ENCODE measurements at regions of chr7 and their contacts with region 1.

Region 1: GRCh38 chr7:151017953-151018420 is 6.3 kb downstream of the ATG9B start:
- DNase-seq: peak; percentile 69 to 88 (median 79)
- ATAC-seq: peak; percentile 50
- H3K4me3 ChIP-seq: peak overlapping the region; percentile 52
- H3K4me3 Mint-ChIP-seq: peak overlapping the region; percentile 79
- H3K27ac ChIP-seq: peak overlapping the region; percentile 1 to 41
- H3K27ac Mint-ChIP-seq: peak overlapping the region; percentile 83
- H3K4me1 ChIP-seq: peaks cover 66% of the 10 kb centered on the region
- H3K4me1 Mint-ChIP-seq: peaks cover 61% of the 10 kb centered on the region
- H3K27me3 ChIP-seq: peaks cover 4 to 7% of the 10 kb centered on the region in 2 experiments
- H3K27me3 Mint-ChIP-seq: peaks cover 10% of the 10 kb centered on the region
- CTCF ChIP-seq: peak; percentile 98

Region 2: GRCh38 chr7:150404805-150405583 is 613.0 kb before region 1 on chr7:
- CTCF ChIA-PET with region 1: no interaction called
- POLR2A ChIA-PET with region 1: no interaction called
- intact Hi-C with region 1: no loop called
- DNase-seq: peak; percentile 56 to 92 (median 72)
- ATAC-seq: peak; percentile 82
- H3K4me3 ChIP-seq: peak overlapping the region; percentile 90
- H3K4me3 Mint-ChIP-seq: peak overlapping the region; percentile 94
- H3K27ac ChIP-seq: peak overlapping the region; percentile 88 to 89
- H3K27ac Mint-ChIP-seq: peak overlapping the region; percentile 82
- H3K4me1 ChIP-seq: peaks cover 34% of the 10 kb centered on the region
- H3K4me1 Mint-ChIP-seq: peaks cover 37% of the 10 kb centered on the region
- H3K27me3 ChIP-seq: no peaks in the 10 kb centered on the region
- H3K27me3 Mint-ChIP-seq: no peaks in the 10 kb centered on the region
- CTCF ChIP-seq: no peak

Region 3: DNA sequence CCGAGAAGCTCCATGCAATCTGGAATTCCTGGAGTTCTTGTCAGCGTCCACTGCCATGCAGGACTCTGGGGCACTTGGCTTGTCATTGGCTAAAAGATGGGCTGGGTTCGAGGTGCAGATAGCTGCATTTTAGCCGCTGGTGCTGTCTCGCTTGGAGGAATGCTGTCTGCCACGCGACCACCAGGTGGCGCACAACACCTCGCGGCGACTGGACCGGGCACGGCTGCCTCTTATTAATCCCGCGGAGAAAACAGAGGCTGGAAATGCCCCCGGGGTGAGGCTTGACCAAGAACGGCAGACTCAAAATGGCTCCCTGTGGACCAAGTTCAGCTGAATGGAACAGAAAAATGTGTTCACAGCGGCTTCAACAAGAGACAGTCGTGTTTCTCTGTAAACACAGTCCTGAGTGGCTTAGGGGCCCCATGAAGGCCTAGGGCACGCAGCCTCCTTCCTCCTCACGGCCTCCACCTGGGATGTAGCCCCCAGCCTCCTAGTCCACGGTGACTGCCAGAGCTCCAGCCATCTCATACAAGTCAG is 119.4 kb before region 1 on chr7:
- CTCF ChIA-PET with region 1: interaction called, 4 read pairs
- POLR2A ChIA-PET with region 1: interaction called, 3 read pairs
- intact Hi-C with region 1: loop called in 1 of 2 experiments (anchors 1 kb)
- DNase-seq: peak; percentile 58 to 87 (median 76)
- ATAC-seq: peak; percentile 87
- H3K4me3 ChIP-seq: no peak overlapping the region
- H3K4me3 Mint-ChIP-seq: no peak overlapping the region
- H3K27ac ChIP-seq: no peak overlapping the region
- H3K27ac Mint-ChIP-seq: no peak overlapping the region
- H3K4me1 ChIP-seq: peaks cover 13% of the 10 kb centered on the region
- H3K4me1 Mint-ChIP-seq: no peaks in the 10 kb centered on the region
- H3K27me3 ChIP-seq: peaks cover 25 to 32% of the 10 kb centered on the region in 2 experiments
- H3K27me3 Mint-ChIP-seq: peaks cover 67% of the 10 kb centered on the region
- CTCF ChIP-seq: peak; percentile 95

Region 4: DNA sequence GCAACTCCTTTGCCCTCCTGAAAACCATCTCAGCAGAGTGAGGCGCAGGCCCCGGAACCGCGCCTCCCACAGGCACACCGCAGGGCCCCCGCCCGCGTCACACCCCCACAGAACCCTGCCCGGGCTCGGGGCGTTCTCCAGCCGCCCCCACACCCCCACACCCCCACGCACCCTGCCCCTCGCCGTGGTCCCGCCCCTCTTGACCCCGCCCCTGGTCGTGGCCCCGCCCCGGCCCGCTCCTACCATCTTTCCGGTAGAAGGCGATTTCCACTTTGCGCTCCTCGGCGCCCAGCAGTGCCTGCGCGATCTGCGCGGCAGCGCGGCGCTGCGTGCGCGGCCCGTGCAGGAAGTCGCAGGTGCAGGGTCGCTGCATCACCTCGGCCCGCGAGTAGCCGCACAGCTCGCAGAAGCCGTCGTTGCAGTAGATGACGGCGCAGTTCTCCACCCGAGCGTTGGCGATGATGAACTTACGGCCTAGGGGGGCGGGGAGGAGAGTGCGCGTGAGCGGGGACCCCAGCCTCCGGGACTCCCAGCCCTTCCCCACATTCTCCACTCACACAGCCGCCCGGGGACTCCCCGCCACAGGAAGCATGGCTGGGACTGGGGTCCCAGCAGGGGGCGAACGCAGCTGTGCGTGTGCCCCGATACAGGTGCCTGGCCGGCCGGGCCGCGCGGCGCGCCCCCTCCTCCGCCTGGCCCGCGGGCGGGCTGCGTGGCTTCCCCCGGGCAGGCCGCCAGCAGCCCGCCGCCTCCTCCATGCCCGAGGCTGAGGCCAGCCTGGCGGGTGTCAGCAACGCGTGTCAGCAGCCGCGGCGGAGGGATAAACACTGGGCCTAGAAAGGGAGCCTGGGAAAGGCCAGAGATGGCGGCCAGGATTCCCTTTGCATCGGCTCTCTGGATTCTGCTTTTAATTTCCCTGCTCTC is 43.3 kb before region 1 on chr7:
- CTCF ChIA-PET with region 1: interaction called, 7 read pairs
- POLR2A ChIA-PET with region 1: interaction called, 20 read pairs
- intact Hi-C with region 1: loop called in 1 of 2 experiments (anchors 5 kb)
- DNase-seq: peak; percentile 76 to 93 (median 84)
- ATAC-seq: peak; percentile 69
- H3K4me3 ChIP-seq: peak overlapping the region; percentile 65
- H3K4me3 Mint-ChIP-seq: peak overlapping the region; percentile 90
- H3K27ac ChIP-seq: peak overlapping the region; percentile 62 to 63
- H3K27ac Mint-ChIP-seq: peak overlapping the region; percentile 91
- H3K4me1 ChIP-seq: peaks cover 64% of the 10 kb centered on the region
- H3K4me1 Mint-ChIP-seq: peaks cover 60% of the 10 kb centered on the region
- H3K27me3 ChIP-seq: peaks cover 24 to 30% of the 10 kb centered on the region in 2 experiments
- H3K27me3 Mint-ChIP-seq: peaks cover 25% of the 10 kb centered on the region
- CTCF ChIP-seq: peak; percentile 24

Region 5: GRCh38 chr7:150994141-150994964 is 23.6 kb before region 1 on chr7:
- CTCF ChIA-PET with region 1: interaction called, 5 read pairs
- POLR2A ChIA-PET with region 1: interaction called, 19 read pairs
- intact Hi-C with region 1: no loop called
- DNase-seq: peak in 4 of 14 experiments; percentile 54 to 60 (median 58)
- ATAC-seq: peak; percentile 53
- H3K4me3 ChIP-seq: peak overlapping the region; percentile 35
- H3K4me3 Mint-ChIP-seq: peak overlapping the region; percentile 54
- H3K27ac ChIP-seq: peak overlapping the region; percentile 15 to 50
- H3K27ac Mint-ChIP-seq: peak overlapping the region; percentile 64
- H3K4me1 ChIP-seq: peaks cover 57% of the 10 kb centered on the region
- H3K4me1 Mint-ChIP-seq: peaks cover 52% of the 10 kb centered on the region
- H3K27me3 ChIP-seq: no peaks in the 10 kb centered on the region
- H3K27me3 Mint-ChIP-seq: no peaks in the 10 kb centered on the region
- CTCF ChIP-seq: no peak

Region 6: GRCh38 chr7:151057989-151058780 is 40.2 kb after region 1 on chr7:
- CTCF ChIA-PET with region 1: interaction called, 7 read pairs
- POLR2A ChIA-PET with region 1: interaction called, 11 read pairs
- intact Hi-C with region 1: loop called (anchors 5 kb)
- DNase-seq: peak; percentile 92 to 100 (median 96)
- ATAC-seq: peak; percentile 94
- H3K4me3 ChIP-seq: peak overlapping the region; percentile 89
- H3K4me3 Mint-ChIP-seq: peak overlapping the region; percentile 96
- H3K27ac ChIP-seq: peak overlapping the region; percentile 69 to 71
- H3K27ac Mint-ChIP-seq: peak overlapping the region; percentile 91
- H3K4me1 ChIP-seq: peaks cover 49% of the 10 kb centered on the region
- H3K4me1 Mint-ChIP-seq: peaks cover 42% of the 10 kb centered on the region
- H3K27me3 ChIP-seq: no peaks in the 10 kb centered on the region
- H3K27me3 Mint-ChIP-seq: no peaks in the 10 kb centered on the region
- CTCF ChIP-seq: no peak

Region 7: GRCh38 chr7:151400626-151401315 is 382.8 kb after region 1 on chr7:
- CTCF ChIA-PET with region 1: no interaction called
- POLR2A ChIA-PET with region 1: no interaction called
- intact Hi-C with region 1: no loop called
- DNase-seq: peak in 3 of 14 experiments; percentile 30 to 46 (median 42)
- ATAC-seq: no peak
- H3K4me3 ChIP-seq: no peak overlapping the region
- H3K4me3 Mint-ChIP-seq: no peak overlapping the region
- H3K27ac ChIP-seq: no peak overlapping the region
- H3K27ac Mint-ChIP-seq: no peak overlapping the region
- H3K4me1 ChIP-seq: peaks cover 57% of the 10 kb centered on the region
- H3K4me1 Mint-ChIP-seq: peaks cover 6% of the 10 kb centered on the region
- H3K27me3 ChIP-seq: no peaks in the 10 kb centered on the region
- H3K27me3 Mint-ChIP-seq: no peaks in the 10 kb centered on the region
- CTCF ChIP-seq: no peak

Region 8: GRCh38 chr7:151936207-151936606 is 918.2 kb after region 1 on chr7:
- CTCF ChIA-PET with region 1: no interaction called
- POLR2A ChIA-PET with region 1: no interaction called
- intact Hi-C with region 1: loop called in 1 of 2 experiments (anchors 10 kb)
- DNase-seq: peak in 3 of 14 experiments; percentile 76 to 84 (median 77)
- ATAC-seq: peak; percentile 88
- H3K4me3 ChIP-seq: peak overlapping the region; percentile 38
- H3K4me3 Mint-ChIP-seq: peak overlapping the region; percentile 87
- H3K27ac ChIP-seq: peak overlapping the region; percentile 49 to 80
- H3K27ac Mint-ChIP-seq: peak overlapping the region; percentile 89
- H3K4me1 ChIP-seq: peaks cover 18% of the 10 kb centered on the region
- H3K4me1 Mint-ChIP-seq: peaks cover 25% of the 10 kb centered on the region
- H3K27me3 ChIP-seq: no peaks in the 10 kb centered on the region
- H3K27me3 Mint-ChIP-seq: no peaks in the 10 kb centered on the region
- CTCF ChIP-seq: no peak